Activated CD4-positive, alpha-beta T cell treated with anti-CD3 and anti-CD28 coated beads for 36 hours (primary cell): ENCODE measurements at regions of chr4 and their contacts with region 1.

Region 1: DNA sequence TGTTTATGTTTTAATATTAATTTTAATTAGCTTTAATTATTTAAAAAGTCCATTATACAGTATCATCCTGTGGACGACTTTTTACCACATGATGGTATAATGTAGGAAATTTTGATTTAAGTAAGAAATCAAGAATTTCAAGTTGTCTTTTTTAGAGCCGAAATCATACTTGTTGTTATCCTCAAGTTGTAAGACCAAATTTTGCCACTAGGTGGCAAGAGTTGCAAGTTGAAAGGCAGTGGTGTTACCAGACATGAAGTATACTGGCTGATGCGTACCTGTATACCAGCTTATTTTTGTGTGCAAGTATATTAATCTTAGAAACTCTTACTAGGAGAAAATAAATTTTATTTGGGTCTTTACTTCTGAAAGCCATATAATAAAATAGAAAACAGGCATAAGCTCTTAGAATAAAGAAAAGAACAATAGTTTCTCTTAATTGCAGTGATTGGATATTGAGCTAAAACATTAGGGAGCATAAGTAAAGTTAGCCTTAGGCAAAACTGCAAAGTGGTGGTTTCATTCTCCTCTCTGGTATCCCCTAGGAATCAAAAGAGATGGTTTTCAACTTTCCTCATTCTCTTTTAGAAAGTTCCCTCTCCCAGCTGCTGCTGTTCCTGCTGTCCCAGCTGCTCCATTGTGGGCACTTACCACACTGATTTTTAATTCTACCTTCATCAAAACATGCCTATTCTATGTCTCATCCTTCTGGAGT is 118.0 kb upstream of the WDFY3 start:
- DNase-seq: peak; percentile 22
- ATAC-seq: peak; percentile 33
- H3K4me3 Mint-ChIP-seq: no peak overlapping the region
- H3K27ac Mint-ChIP-seq: no peak overlapping the region
- H3K4me1 Mint-ChIP-seq: no peaks in the 10 kb centered on the region
- H3K27me3 Mint-ChIP-seq: no peaks in the 10 kb centered on the region

Region 2: GRCh38 chr4:85370430-85371032 is 286.0 kb after region 1 on chr4:
- CTCF ChIA-PET with region 1: interaction called, 5 read pairs
- POLR2A ChIA-PET with region 1: no interaction called
- intact Hi-C with region 1: loop called in 1 of 2 experiments (anchors 2 kb)
- DNase-seq: peak; percentile 31
- ATAC-seq: no peak
- H3K4me3 Mint-ChIP-seq: no peak overlapping the region
- H3K27ac Mint-ChIP-seq: no peak overlapping the region
- H3K4me1 Mint-ChIP-seq: no peaks in the 10 kb centered on the region
- H3K27me3 Mint-ChIP-seq: peaks cover 2% of the 10 kb centered on the region

Region 3: GRCh38 chr4:85747882-85748491 is 663.5 kb after region 1 on chr4:
- CTCF ChIA-PET with region 1: interaction called, 3 read pairs
- POLR2A ChIA-PET with region 1: interaction called, 4 read pairs
- intact Hi-C with region 1: loop called in 1 of 2 experiments (anchors 1 kb)
- DNase-seq: peak; percentile 14
- ATAC-seq: no peak
- H3K4me3 Mint-ChIP-seq: no peak overlapping the region
- H3K27ac Mint-ChIP-seq: no peak overlapping the region
- H3K4me1 Mint-ChIP-seq: no peaks in the 10 kb centered on the region
- H3K27me3 Mint-ChIP-seq: no peaks in the 10 kb centered on the region

Region 4: GRCh38 chr4:85968945-85969819 is 884.6 kb after region 1 on chr4:
- CTCF ChIA-PET with region 1: interaction called, 7 read pairs
- POLR2A ChIA-PET with region 1: no interaction called
- intact Hi-C with region 1: loop called in 1 of 2 experiments (anchors 2 kb)
- DNase-seq: no peak
- ATAC-seq: no peak
- H3K4me3 Mint-ChIP-seq: no peak overlapping the region
- H3K27ac Mint-ChIP-seq: no peak overlapping the region
- H3K4me1 Mint-ChIP-seq: no peaks in the 10 kb centered on the region
- H3K27me3 Mint-ChIP-seq: peaks cover 2% of the 10 kb centered on the region

Region 5: GRCh38 chr4:86043755-86044592 is 959.4 kb after region 1 on chr4:
- CTCF ChIA-PET with region 1: interaction called, 12 read pairs
- POLR2A ChIA-PET with region 1: no interaction called
- intact Hi-C with region 1: loop called (anchors 5 to 10 kb)
- DNase-seq: peak; percentile 7
- ATAC-seq: no peak
- H3K4me3 Mint-ChIP-seq: no peak overlapping the region
- H3K27ac Mint-ChIP-seq: no peak overlapping the region
- H3K4me1 Mint-ChIP-seq: no peaks in the 10 kb centered on the region
- H3K27me3 Mint-ChIP-seq: no peaks in the 10 kb centered on the region